HCT116 (cell line): ENCODE measurements at regions of chr1 and their contacts with region 1.

Region 1: GRCh38 chr1:209747580-209748262 is 8.1 kb upstream of the TRAF3IP3 start:
- DNase-seq: peak; percentile 98
- ATAC-seq: peak; percentile 100
- H3K4me3 ChIP-seq: no peak overlapping the region
- H3K27ac ChIP-seq: no peak overlapping the region
- H3K4me1 ChIP-seq: peaks cover 0 to 14% of the 10 kb centered on the region in 2 experiments; a peak in 2 of 4 replicates
- H3K27me3 ChIP-seq: no peaks in the 10 kb centered on the region
- CTCF ChIP-seq: peak; percentile 88 to 97 (median 94)
- POLR2A ChIP-seq: no peak
- RAD21 ChIP-seq: peak; percentile 87

Region 2: DNA sequence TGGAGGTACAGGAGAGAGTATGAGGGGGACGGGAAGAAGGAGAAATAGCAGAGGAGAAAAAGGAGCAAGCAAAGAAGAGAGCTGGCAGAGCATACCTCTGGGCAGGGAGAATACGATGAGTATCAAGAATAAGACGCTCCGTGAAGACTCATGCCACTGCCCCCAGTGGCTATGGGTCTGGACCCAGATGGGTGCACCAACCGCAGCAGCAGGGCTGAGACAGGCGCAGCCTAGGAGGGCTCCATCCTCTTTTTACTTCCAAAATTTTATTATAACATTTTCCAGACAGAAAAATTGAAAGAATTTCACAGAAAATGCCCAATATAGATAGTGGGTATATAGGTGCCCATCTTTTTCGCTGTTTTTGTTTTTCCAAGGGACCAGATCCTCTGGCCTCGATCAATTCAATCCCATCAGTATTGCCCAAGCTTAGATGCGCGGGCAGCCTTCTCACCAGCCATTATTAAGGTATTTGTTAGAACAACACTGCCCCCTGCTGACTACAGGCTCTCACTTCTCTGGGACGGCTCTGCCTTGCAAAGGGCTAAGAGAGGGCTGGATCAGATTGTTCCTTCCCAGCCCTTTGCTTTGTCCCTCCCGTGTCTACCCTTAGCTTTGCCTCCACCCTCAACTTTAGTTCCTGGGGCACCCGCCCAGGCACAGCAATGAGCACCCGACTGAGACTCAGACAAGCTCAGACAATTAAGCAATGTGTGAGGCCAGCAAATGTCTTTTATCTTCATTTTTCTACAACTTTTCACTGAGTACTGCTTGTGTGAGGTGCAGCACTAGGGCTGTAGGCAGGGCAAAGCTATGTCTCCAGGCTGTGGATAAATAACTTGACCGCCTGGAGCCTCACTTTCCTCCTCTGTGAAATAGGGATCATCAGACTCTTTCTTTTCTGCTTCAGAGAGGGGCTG is 181.7 kb before region 1 on chr1:
- CTCF ChIA-PET with region 1: interaction called, 11 read pairs
- POLR2A ChIA-PET with region 1: no interaction called
- RAD21 ChIA-PET with region 1: no interaction called
- intact Hi-C with region 1: loop called (anchors 2 kb)
- DNase-seq: peak; percentile 78
- ATAC-seq: peak; percentile 96
- H3K4me3 ChIP-seq: no peak overlapping the region
- H3K27ac ChIP-seq: no peak overlapping the region
- H3K4me1 ChIP-seq: peaks cover 0 to 6% of the 10 kb centered on the region in 2 experiments; a peak in 1 of 4 replicates
- H3K27me3 ChIP-seq: peaks cover 10% of the 10 kb centered on the region; the same call in 1 of the 2 replicates
- CTCF ChIP-seq: peak; percentile 74 to 84 (median 83); a peak in 5 of 6 replicates
- POLR2A ChIP-seq: no peak
- RAD21 ChIP-seq: peak; percentile 83

Region 3: GRCh38 chr1:209601809-209602657 is 145.7 kb before region 1 on chr1:
- CTCF ChIA-PET with region 1: interaction called, 3 read pairs
- POLR2A ChIA-PET with region 1: no interaction called
- RAD21 ChIA-PET with region 1: no interaction called
- intact Hi-C with region 1: loop called (anchors 1 kb)
- DNase-seq: peak; percentile 52
- ATAC-seq: peak; percentile 100
- H3K4me3 ChIP-seq: no peak overlapping the region
- H3K27ac ChIP-seq: no peak overlapping the region
- H3K4me1 ChIP-seq: 0 out of 4 replicates have a peak, but pooled peaks cover 0 to 6% of the 10 kb centered on the region in 2 experiments
- H3K27me3 ChIP-seq: no peaks in the 10 kb centered on the region
- CTCF ChIP-seq: peak; percentile 79 to 93 (median 83)
- POLR2A ChIP-seq: no peak
- RAD21 ChIP-seq: peak; percentile 94

Region 4: GRCh38 chr1:209692745-209693504 is 54.8 kb before region 1 on chr1:
- CTCF ChIA-PET with region 1: no interaction called
- POLR2A ChIA-PET with region 1: no interaction called
- RAD21 ChIA-PET with region 1: no interaction called
- intact Hi-C with region 1: loop called (anchors 2 kb)
- DNase-seq: peak; percentile 72
- ATAC-seq: peak; percentile 80
- H3K4me3 ChIP-seq: no peak overlapping the region
- H3K27ac ChIP-seq: no peak overlapping the region
- H3K4me1 ChIP-seq: peaks cover 8 to 24% of the 10 kb centered on the region in 2 experiments; a peak in 3 of 4 replicates
- H3K27me3 ChIP-seq: peaks cover 16% of the 10 kb centered on the region; the same call in 1 of the 2 replicates
- CTCF ChIP-seq: peak; percentile 68 to 98 (median 87)
- POLR2A ChIP-seq: no peak
- RAD21 ChIP-seq: peak; percentile 100

Region 5: GRCh38 chr1:209761011-209761635 is 13.4 kb after region 1 on chr1:
- CTCF ChIA-PET with region 1: interaction called, 10 read pairs
- POLR2A ChIA-PET with region 1: no interaction called
- RAD21 ChIA-PET with region 1: no interaction called
- intact Hi-C with region 1: no loop called
- DNase-seq: no peak
- ATAC-seq: no peak
- H3K4me3 ChIP-seq: no peak overlapping the region
- H3K27ac ChIP-seq: no peak overlapping the region
- H3K4me1 ChIP-seq: no peaks in the 10 kb centered on the region
- H3K27me3 ChIP-seq: no peaks in the 10 kb centered on the region
- CTCF ChIP-seq: no peak
- POLR2A ChIP-seq: no peak
- RAD21 ChIP-seq: no peak